ENCODE measurements at regions of chr13 and their contacts with region 1.

Region 1: GRCh38 chr13:110225609-110226562 is 81.1 kb downstream of the COL4A1 start:
- DNase-seq: no peak
- H3K4me3 ChIP-seq: no peak overlapping the region
- H3K27ac ChIP-seq: peak overlapping the region; percentile 49 to 82 (median 59)
- H3K4me1 ChIP-seq: peaks cover 0 to 15% (median 7%) of the 10 kb centered on the region in 4 donors
- H3K27me3 ChIP-seq: no peaks in the 10 kb centered on the region
- CTCF ChIP-seq: no peak
- EP300 ChIP-seq: no peak
- POLR2A ChIP-seq: no peak

Region 2: DNA sequence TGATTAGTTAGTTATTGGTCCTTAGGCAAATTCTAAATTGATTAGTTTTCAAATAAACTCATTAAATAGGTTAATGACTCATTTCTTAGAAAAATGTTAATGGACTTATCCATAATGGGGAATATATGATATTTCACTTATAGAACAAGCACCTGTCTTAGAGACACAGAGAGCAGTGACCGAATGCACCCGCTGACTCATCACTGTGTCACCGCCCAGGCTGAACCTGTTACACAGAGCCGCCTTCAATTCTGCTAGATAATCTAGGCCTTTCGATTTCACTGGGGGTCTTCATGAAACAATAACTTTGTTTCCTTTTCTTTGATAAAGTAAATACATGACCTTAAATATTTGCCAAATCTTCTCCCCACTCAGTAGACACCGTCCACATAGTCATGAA is 452.6 kb before region 1 on chr13:
- in situ Hi-C with region 1: no loop called
- intact Hi-C with region 1: no loop called
- DNase-seq: no peak
- H3K4me3 ChIP-seq: no peak overlapping the region
- H3K27ac ChIP-seq: no peak overlapping the region
- H3K4me1 ChIP-seq: peaks cover 5 to 17% (median 14%) of the 10 kb centered on the region in 4 donors
- H3K27me3 ChIP-seq: no peaks in the 10 kb centered on the region
- CTCF ChIP-seq: no peak
- EP300 ChIP-seq: no peak
- POLR2A ChIP-seq: no peak

Region 3: GRCh38 chr13:110023729-110024644 is 201.9 kb before region 1 on chr13:
- in situ Hi-C with region 1: no loop called
- intact Hi-C with region 1: no loop called
- DNase-seq: peak; percentile 10
- H3K4me3 ChIP-seq: no peak overlapping the region
- H3K27ac ChIP-seq: peak overlapping the region; percentile 47 to 74 (median 57)
- H3K4me1 ChIP-seq: peaks cover 0 to 6% (median 2%) of the 10 kb centered on the region in 4 donors
- H3K27me3 ChIP-seq: no peaks in the 10 kb centered on the region
- CTCF ChIP-seq: no peak
- EP300 ChIP-seq: no peak
- POLR2A ChIP-seq: no peak

Region 4: DNA sequence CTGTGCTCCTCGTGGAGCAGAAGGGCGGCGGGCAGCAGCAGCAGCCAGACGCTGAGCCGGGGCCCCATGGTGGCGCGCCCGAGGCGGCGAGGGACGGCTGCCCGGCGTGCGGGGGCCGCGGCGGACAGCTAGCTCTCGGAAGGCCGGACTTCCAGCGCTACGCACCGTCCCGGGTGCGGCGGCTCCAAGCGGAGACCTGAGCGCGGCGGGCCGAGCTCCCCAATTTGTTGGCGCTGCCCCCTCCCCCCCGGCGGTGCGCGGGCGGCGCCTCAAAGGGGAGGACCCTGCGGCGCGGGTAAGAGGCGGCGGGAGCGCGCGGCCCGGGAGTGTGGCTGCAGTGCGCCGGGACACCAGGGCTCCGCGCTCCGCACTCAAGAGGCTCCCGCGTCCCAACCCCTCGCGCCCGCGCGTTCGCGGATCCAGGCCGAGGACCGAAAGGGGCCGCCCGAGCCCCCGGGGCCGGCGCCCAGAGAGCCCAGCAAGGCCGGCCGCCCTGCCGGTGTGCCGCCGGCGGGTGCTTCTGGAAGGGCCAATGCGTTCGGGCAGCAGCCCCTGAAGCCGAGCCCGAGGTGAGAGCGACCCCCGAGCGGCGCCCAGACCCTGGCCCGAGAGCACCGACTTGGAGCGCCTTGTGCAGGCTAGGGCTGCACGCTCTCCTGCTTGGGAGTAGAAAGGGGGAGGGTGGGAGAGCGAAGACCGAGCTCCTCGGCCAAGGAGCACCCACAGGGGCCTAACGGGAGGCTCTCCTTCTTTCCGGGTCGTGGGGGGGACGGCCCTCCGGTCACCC is 81.3 kb after region 1 on chr13 and contains the starts of genes COL4A1 and COL4A2:
- in situ Hi-C with region 1: no loop called
- intact Hi-C with region 1: loop called (anchors 10 kb)
- DNase-seq: peak; percentile 61
- H3K4me3 ChIP-seq: peak within 1 kb of the TSS; percentile 58 to 88 (median 74)
- H3K27ac ChIP-seq: peak within 1 kb of the TSS; percentile 88 to 98 (median 94)
- H3K4me1 ChIP-seq: peaks cover 0 to 39% (median 28%) of the 10 kb centered on the region in 4 donors
- H3K27me3 ChIP-seq: peaks cover 37% of the 10 kb centered on the region
- CTCF ChIP-seq: no peak
- EP300 ChIP-seq: no peak
- POLR2A ChIP-seq: peak; percentile 69
- total RNA-seq, gene COL4A1: 46.4 to 180 (median 99.2) TPM
- total RNA-seq, gene COL4A2: 75.1 to 322 (median 115) TPM

Region 5: DNA sequence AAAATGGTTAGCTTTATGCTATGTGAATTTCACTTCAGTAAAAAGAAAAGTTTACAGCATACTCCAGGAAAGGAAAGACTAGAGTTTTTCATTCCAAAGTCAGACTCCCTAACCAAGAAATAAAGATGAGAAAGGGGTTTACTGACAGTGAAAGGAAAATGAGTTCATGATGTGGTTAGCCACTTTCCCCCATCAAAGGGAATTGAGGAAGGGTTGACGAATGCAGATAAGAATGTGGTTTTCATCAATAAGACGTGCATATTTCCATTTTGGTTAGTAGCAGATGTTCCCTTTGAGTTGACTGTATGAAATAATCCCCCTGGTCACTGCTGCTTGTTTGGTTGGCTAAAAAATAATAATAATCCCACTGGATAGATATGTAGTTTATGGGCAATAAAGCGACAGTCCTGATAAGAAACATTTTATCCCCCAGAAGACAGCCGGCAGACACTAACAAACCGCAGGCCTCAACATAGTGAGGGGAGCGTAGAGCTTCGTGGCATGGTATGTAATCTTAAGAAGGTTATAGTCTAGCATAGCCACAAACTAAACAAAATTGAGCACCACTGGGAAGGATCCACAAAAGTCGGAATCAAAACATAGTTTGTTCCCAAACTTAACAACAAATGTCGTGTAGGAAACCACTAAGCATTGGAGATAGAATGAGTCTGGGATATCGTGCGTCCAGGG is 196.0 kb after region 1 on chr13:
- in situ Hi-C with region 1: loop called in 3 of 4 experiments (anchors 10 to 25 kb)
- intact Hi-C with region 1: loop called (anchors 5 kb)
- DNase-seq: no peak
- H3K4me3 ChIP-seq: no peak overlapping the region
- H3K27ac ChIP-seq: peak overlapping the region; percentile 17 to 56 (median 36)
- H3K4me1 ChIP-seq: peaks cover 5 to 30% (median 17%) of the 10 kb centered on the region in 4 donors
- H3K27me3 ChIP-seq: peaks cover 6% of the 10 kb centered on the region
- CTCF ChIP-seq: no peak
- EP300 ChIP-seq: no peak
- POLR2A ChIP-seq: no peak